CD8-positive, alpha-beta T cell (primary cell): ENCODE measurements at regions of chr3 and their contacts with region 1.

Region 1: DNA sequence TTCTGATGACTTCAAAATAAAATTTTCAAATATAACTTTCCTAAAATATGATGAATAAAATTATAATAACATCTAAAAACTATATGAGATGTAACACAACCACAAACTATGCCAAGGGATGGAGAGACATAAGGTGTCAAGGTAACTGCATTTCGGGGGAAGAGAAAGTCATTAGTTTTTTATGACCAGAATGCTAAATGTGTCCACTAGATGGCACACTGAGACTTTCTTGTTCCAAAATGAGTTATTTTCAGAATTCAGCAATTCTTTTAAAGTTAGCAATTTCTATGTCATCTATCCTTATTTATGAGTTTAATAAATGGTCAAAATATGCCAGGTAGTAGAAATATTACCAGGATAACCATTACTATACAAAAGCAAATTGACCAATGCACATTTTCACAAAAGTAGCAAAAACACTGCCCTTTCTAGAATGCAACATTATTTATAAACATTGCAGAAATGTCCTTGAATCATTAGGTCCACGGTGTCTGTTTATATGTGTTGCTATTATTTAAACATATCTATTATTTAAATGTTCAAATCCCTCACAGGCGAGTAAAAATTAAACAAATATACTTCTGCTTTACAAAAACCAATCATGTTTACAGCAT is 374.2 kb downstream of the PLCL2 start:
- DNase-seq: peak in 3 of 9 experiments; percentile 15 to 67 (median 58)
- ATAC-seq: no peak
- H3K4me3 ChIP-seq: no peak overlapping the region
- H3K4me3 Mint-ChIP-seq: no peak overlapping the region
- H3K27ac ChIP-seq: no peak overlapping the region
- H3K27ac Mint-ChIP-seq: no peak overlapping the region
- H3K4me1 ChIP-seq: no peaks in the 10 kb centered on the region
- H3K4me1 Mint-ChIP-seq: peaks cover 2% of the 10 kb centered on the region
- H3K27me3 ChIP-seq: no peaks in the 10 kb centered on the region
- H3K27me3 Mint-ChIP-seq: no peaks in the 10 kb centered on the region
- CTCF ChIP-seq: peak; percentile 81

Region 2: DNA sequence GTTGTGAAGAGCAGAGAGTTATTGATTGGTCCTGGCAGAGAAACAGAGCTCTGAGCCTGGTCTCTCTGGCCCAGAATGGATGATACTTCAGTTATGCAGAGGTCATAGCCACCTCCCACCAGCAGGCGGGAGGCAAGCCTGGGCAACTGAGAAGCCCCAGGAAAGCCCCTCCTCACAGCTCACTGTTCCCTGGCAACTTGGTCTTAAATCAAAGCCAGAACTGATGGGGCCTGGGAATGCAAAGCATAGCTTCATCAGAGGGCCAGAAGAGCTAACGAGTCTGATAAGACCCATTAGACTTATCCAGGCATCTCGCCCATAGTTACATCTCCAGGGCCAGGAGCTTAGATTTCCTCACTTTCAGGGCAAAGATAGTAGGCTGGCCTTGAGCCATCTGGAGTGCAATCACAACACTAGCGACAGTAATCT is 1731.9 kb before region 1 on chr3:
- CTCF ChIA-PET with region 1: no interaction called
- POLR2A ChIA-PET with region 1: no interaction called
- intact Hi-C with region 1: no loop called
- DNase-seq: no peak
- ATAC-seq: no peak
- H3K4me3 ChIP-seq: no peak overlapping the region
- H3K4me3 Mint-ChIP-seq: no peak overlapping the region
- H3K27ac ChIP-seq: no peak overlapping the region
- H3K27ac Mint-ChIP-seq: no peak overlapping the region
- H3K4me1 ChIP-seq: peaks cover 16% of the 10 kb centered on the region
- H3K4me1 Mint-ChIP-seq: peaks cover 28% of the 10 kb centered on the region
- H3K27me3 ChIP-seq: no peaks in the 10 kb centered on the region
- H3K27me3 Mint-ChIP-seq: no peaks in the 10 kb centered on the region
- CTCF ChIP-seq: no peak

Region 3: GRCh38 chr3:17182166-17182565 is 76.8 kb before region 1 on chr3:
- CTCF ChIA-PET with region 1: no interaction called
- POLR2A ChIA-PET with region 1: no interaction called
- intact Hi-C with region 1: no loop called
- DNase-seq: peak in 1 of 9 experiments; percentile 39
- ATAC-seq: no peak
- H3K4me3 ChIP-seq: no peak overlapping the region
- H3K4me3 Mint-ChIP-seq: no peak overlapping the region
- H3K27ac ChIP-seq: no peak overlapping the region
- H3K27ac Mint-ChIP-seq: no peak overlapping the region
- H3K4me1 ChIP-seq: peaks cover 13% of the 10 kb centered on the region
- H3K4me1 Mint-ChIP-seq: peaks cover 20% of the 10 kb centered on the region
- H3K27me3 ChIP-seq: no peaks in the 10 kb centered on the region
- H3K27me3 Mint-ChIP-seq: no peaks in the 10 kb centered on the region
- CTCF ChIP-seq: no peak

Region 4: GRCh38 chr3:17412950-17413530 is 154.1 kb after region 1 on chr3:
- CTCF ChIA-PET with region 1: interaction called, 4 read pairs
- POLR2A ChIA-PET with region 1: no interaction called
- intact Hi-C with region 1: loop called (anchors 1 to 2 kb)
- DNase-seq: peak in 4 of 9 experiments; percentile 9 to 67 (median 35)
- ATAC-seq: no peak
- H3K4me3 ChIP-seq: no peak overlapping the region
- H3K4me3 Mint-ChIP-seq: no peak overlapping the region
- H3K27ac ChIP-seq: no peak overlapping the region
- H3K27ac Mint-ChIP-seq: no peak overlapping the region
- H3K4me1 ChIP-seq: no peaks in the 10 kb centered on the region
- H3K4me1 Mint-ChIP-seq: no peaks in the 10 kb centered on the region
- H3K27me3 ChIP-seq: no peaks in the 10 kb centered on the region
- H3K27me3 Mint-ChIP-seq: no peaks in the 10 kb centered on the region
- CTCF ChIP-seq: peak; percentile 71

Region 5: DNA sequence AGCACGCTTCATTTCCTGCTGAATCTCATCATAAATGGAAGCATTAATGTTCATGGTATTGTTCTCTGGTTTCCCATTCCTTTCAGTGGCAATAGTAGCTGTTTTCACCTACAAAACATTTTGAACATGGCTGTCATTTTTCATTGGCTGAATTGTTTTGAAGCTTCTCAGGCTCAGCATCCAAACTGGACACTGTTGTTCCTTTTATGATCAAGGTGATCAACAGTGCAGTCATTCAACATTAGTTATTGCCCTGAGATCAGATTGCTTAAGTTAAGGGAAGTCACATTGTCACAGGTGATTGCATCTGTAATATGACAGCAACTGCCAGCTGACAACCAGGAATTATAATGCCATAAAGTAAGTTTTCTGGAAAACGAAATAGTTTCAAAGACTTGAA is 1119.3 kb after region 1 on chr3:
- CTCF ChIA-PET with region 1: no interaction called
- POLR2A ChIA-PET with region 1: no interaction called
- intact Hi-C with region 1: loop called in 1 of 2 experiments (anchors 5 kb)
- DNase-seq: no peak
- ATAC-seq: no peak
- H3K4me3 ChIP-seq: no peak overlapping the region
- H3K4me3 Mint-ChIP-seq: no peak overlapping the region
- H3K27ac ChIP-seq: no peak overlapping the region
- H3K27ac Mint-ChIP-seq: no peak overlapping the region
- H3K4me1 ChIP-seq: peaks cover 73% of the 10 kb centered on the region
- H3K4me1 Mint-ChIP-seq: peaks cover 83% of the 10 kb centered on the region
- H3K27me3 ChIP-seq: no peaks in the 10 kb centered on the region
- H3K27me3 Mint-ChIP-seq: no peaks in the 10 kb centered on the region
- CTCF ChIP-seq: no peak